ENCODE measurements at regions of chr11 and their contacts with region 1.

Region 1: DNA sequence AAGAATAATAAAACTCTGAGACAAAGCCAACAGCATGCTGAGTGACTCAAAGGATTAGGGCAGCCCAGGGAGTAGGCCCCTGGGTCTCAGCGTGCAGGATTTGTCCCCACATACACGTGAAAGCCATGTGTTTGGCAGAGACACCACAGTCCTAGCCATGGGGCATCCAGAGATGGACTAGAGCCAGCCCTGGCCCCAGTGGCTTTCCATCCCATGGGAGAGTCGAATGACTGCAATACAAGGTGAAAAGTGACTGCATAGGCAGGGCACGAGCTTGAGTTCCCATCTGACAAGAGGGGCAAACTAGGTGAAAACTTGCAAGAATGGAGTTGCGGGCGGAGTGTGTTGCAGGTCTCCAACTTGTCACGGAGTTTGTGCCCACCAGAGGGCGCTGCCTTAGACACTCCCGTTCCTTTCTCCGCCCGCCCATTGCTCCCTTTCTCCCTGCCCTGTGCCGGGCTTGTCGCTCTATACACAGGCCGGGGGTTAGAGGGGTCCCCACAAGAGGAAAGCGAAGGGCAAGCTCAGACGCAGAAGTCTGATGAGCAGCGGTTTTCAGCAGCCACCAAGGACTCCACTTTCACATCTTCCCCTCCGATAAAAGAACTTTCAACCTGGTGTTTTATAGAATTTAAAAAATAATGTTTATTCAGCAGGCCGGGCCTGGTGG is 24.2 kb downstream of the TSKU start:
- DNase-seq: peak; percentile 57
- H3K4me3 Mint-ChIP-seq: no peak overlapping the region
- H3K27ac Mint-ChIP-seq: no peak overlapping the region
- H3K4me1 Mint-ChIP-seq: peaks cover 36% of the 10 kb centered on the region
- H3K27me3 Mint-ChIP-seq: peaks cover 2% of the 10 kb centered on the region

Region 2: DNA sequence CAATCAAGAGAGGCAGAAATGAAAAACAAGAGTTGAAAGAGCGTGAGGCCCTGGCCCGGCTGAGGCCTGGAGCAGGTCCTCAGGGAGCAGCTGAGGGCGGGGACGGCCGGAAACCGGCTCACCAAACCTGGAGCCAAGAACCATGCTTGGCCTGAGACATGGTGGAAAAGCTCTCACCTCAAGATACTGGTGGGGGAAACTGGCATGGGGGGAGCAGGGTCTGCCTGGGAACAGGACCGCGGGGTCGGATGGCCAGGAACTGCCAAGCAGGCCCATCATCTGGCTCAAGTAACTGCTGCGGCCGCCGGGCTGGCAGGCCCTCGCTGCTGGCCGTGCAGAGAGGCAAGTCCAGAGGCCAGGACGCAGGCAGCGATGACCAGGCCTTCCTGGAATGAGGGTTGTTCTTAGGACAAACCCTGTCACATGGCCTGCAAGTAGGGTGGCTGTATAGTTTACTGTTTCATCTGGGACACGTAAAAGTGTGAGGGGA is 582.2 kb before region 1 on chr11:
- intact Hi-C with region 1: no loop called
- DNase-seq: no peak
- H3K4me3 Mint-ChIP-seq: no peak overlapping the region
- H3K27ac Mint-ChIP-seq: no peak overlapping the region
- H3K4me1 Mint-ChIP-seq: peaks cover 1% of the 10 kb centered on the region
- H3K27me3 Mint-ChIP-seq: peaks cover 29% of the 10 kb centered on the region

Region 3: GRCh38 chr11:76444384-76445123 is 362.8 kb before region 1 on chr11 and contains the start of gene EMSY:
- intact Hi-C with region 1: loop called (anchors 10 kb)
- DNase-seq: peak; percentile 93
- H3K4me3 Mint-ChIP-seq: peak within 1 kb of the TSS; percentile 95
- H3K27ac Mint-ChIP-seq: peak within 1 kb of the TSS; percentile 97
- H3K4me1 Mint-ChIP-seq: peaks cover 24% of the 10 kb centered on the region
- H3K27me3 Mint-ChIP-seq: no peaks in the 10 kb centered on the region
- total RNA-seq, gene EMSY: 31.5 and 32.0 TPM in 2 replicates

Region 4: DNA sequence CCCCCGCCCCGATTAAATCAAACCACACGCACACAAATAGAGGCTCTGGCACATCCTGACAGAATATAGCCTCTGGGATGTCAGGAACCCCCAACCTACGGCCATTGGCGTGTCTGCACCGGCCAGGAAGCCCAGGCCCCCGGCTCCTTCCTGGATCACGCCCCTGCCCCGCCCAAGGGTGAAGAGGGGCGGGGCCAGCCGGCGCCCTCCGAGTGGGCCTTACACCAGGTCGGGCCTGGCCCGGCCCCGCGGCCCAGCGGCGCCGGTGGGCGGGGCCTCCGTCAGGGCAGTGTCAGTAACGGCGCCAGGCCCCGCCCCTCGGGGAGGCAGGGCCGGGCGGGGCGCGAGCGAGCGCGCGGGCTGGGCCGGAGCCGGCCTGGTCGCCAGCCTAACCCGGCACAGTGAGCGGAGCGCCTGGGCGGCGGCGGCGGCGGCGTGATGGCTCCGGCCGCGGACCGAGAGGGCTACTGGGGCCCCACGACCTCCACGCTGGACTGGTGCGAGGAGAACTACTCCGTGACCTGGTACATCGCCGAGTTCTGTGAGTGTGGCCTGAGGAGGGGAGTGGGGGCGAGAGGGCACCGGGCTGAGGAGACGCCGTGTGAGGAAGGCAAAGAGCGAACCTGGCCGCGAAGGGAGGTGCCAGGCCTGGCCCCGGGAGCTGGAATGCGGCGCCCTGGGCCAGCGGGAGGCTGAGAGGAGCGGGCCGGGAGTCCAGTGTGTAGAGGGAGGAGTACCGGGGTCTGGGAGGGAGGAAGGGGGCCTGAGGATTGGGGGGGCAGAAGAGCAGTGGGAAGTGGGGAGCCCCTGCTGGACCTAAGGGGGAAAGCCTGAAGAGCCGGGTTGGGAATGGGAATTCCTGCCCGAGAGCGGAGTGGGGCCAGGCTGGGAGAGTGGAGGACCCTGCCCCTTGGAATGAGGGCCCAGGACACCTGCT is 53.5 kb after region 1 on chr11 and contains the start of gene ACER3:
- intact Hi-C with region 1: loop called (anchors 5 kb)
- DNase-seq: peak; percentile 85
- H3K4me3 Mint-ChIP-seq: peak within 1 kb of the TSS; percentile 89
- H3K27ac Mint-ChIP-seq: peak within 1 kb of the TSS; percentile 71
- H3K4me1 Mint-ChIP-seq: peaks cover 23% of the 10 kb centered on the region
- H3K27me3 Mint-ChIP-seq: peaks cover 2% of the 10 kb centered on the region
- total RNA-seq, gene ACER3: 15.4 and 15.6 TPM in 2 replicates

Region 5: DNA sequence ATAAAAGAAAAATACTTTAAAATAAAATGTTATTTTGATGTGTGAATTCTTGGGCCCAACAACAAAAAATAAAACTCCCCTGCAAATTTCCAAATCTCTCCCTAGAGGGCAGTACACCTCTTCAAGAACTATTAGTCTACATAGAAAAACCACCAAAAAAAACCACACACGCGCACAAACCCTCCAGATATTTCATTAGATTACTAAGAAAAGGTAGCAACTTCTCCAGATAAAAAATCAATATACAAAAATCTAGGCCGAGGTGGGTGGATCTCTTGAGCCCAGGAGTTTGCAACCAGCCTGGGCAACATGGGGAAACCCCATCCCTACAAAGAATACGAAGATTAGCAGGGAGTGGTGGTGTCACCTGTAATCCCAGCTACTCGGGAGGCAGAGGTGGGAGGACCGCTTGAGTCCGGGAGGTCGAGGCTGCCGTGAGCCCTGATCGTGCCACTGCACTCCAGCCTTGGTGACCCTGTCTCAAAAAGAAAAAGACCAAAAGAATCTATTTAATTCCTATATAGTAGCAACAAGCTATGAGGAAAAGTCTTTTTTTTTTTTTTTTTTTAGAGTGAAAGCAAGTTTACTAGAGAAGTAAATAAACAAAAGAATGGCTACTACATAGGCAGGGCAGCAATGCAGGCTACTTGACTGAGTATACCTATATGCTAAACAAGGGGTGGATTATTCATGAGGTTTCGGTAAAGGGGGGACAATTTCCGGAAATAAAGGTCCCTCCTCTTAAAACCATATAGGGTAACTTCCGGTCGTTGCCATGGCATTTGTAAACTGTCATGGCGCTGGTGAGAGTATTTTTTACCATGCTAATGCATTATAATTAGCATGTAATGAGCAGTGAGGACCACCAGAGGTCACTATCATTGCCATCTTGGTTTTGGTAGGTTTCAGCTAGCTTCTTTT is 239.9 kb after region 1 on chr11:
- intact Hi-C with region 1: loop called (anchors 2 kb)
- DNase-seq: peak; percentile 73
- H3K4me3 Mint-ChIP-seq: peak overlapping the region; percentile 28
- H3K27ac Mint-ChIP-seq: peak overlapping the region; percentile 1
- H3K4me1 Mint-ChIP-seq: peaks cover 10% of the 10 kb centered on the region
- H3K27me3 Mint-ChIP-seq: peaks cover 19% of the 10 kb centered on the region

Measured in activated T-helper 2 cell treated with anti-CD3 and anti-CD28 coated beads, Interferon-gamma antibody, Interleukin-2, Interleukin-4, amounts not matched to agents 10 μg/mL and 5 μg/mL and 100 μg/mL, durations not matched to agents 14 hours and 24 hours and 36 hours (primary cell).